Activated T-helper 1 cell treated with anti-CD3 and anti-CD28 coated beads, Interleukin-12 subunit alpha, Interleukin-12 subunit beta, Interleukin-2, Interleukin-4 antibody, amounts not matched to agents 30 ng/mL and 10 ng/mL and 1 ng/mL, durations not matched to agents 14 hours and 24 hours and 36 hours (primary cell): ENCODE measurements at regions of chr6 and their contacts with region 1.

Region 1: DNA sequence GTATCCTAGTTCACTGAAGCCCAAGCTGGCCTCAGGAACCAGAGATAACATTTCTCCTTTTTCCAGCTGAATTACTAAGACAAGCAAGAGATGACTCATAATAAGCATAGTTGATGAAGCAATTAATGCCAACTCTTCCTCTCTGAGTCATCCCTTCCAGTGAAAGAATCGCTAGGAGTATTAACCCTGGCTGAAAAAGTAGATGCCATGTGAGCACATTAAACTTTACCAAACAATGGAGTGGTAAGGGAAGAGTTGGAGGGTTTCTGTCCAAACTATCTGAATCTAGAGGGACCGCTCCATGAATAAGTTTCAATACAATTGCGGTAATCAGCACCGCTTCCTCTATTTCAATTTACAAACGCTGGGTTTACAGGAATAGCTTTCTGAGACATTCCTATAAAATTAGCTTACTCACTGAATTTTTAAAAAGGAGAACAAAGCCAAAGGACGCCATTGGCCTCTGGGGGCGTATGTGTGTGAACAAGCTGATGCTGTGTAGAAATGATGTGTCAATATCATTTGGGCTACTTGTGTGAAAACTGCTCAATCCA is 48.3 kb downstream of the ATXN1 start:
- DNase-seq: no peak
- H3K4me3 Mint-ChIP-seq: peak overlapping the region; percentile 60
- H3K27ac Mint-ChIP-seq: peak overlapping the region; percentile 88
- H3K4me1 Mint-ChIP-seq: peaks cover 65% of the 10 kb centered on the region
- H3K27me3 Mint-ChIP-seq: no peaks in the 10 kb centered on the region

Region 2: GRCh38 chr6:16533721-16534136 is 179.3 kb before region 1 on chr6:
- intact Hi-C with region 1: loop called (anchors 5 kb)
- DNase-seq: no peak
- H3K4me3 Mint-ChIP-seq: no peak overlapping the region
- H3K27ac Mint-ChIP-seq: peak overlapping the region; percentile 83
- H3K4me1 Mint-ChIP-seq: peaks cover 45% of the 10 kb centered on the region
- H3K27me3 Mint-ChIP-seq: no peaks in the 10 kb centered on the region

Region 3: DNA sequence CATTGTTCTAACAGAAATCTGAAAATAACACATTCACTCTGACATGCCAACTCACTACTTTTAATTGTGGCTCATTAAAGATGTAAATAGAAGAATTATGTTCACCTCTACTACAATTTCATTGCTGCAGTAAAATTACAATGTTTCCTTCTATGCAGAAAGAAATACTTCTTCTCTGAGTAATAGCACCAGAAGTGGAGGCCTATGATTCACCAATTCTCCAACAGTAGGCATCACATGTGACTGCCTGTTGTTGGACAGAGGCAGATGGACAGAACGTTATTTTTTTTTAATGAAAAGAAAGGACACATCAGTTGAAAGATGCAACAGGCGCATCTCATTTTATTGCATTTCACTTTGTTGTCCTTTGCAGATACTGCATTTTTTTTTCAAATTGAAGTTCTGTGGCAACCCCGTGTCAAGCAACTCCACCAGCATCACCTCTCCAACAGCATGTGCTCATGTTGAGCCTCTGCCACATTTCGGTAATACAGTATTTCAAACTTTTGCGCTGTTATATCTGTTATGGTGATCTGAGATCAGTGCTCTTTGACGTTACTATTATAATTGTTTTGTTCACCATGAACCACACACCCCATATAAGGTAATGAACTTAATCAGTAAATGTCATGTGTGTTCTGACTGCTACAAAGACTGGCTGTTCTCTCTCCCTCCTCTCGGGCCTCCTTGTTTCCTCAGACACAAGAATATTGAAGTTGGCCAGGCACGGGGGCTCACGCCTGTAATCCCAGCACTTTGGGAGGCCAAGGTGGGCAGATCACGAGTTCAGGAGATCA is 73.1 kb before region 1 on chr6:
- intact Hi-C with region 1: no loop called
- DNase-seq: no peak
- H3K4me3 Mint-ChIP-seq: no peak overlapping the region
- H3K27ac Mint-ChIP-seq: no peak overlapping the region
- H3K4me1 Mint-ChIP-seq: peaks cover 44% of the 10 kb centered on the region
- H3K27me3 Mint-ChIP-seq: no peaks in the 10 kb centered on the region

Region 4: DNA sequence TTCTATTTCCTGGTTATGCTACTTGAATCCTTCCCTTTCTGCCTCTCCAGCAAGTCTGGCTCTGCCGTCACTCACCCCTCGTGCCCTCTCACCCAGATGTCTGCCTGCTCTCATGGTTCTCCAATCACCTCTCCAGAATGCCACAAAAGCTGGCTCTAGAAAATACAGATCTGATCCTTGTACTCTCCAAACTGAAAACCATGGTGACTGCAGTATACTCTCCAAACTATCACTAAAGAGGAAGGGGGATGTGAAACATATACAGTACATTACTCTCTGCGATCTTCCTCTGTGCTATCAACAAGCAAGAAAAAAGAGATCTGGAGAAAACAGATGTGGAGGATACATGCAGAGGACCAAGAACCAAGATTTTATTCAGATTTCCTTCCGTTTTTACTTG is 42.8 kb before region 1 on chr6:
- intact Hi-C with region 1: loop called (anchors 1 kb)
- DNase-seq: no peak
- H3K4me3 Mint-ChIP-seq: peak overlapping the region; percentile 51
- H3K27ac Mint-ChIP-seq: peak overlapping the region; percentile 94
- H3K4me1 Mint-ChIP-seq: peaks cover 84% of the 10 kb centered on the region
- H3K27me3 Mint-ChIP-seq: no peaks in the 10 kb centered on the region

Region 5: GRCh38 chr6:16690608-16691198 is 22.3 kb before region 1 on chr6:
- intact Hi-C with region 1: loop called (anchors 1 kb)
- DNase-seq: no peak
- H3K4me3 Mint-ChIP-seq: peak overlapping the region; percentile 70
- H3K27ac Mint-ChIP-seq: peak overlapping the region; percentile 98
- H3K4me1 Mint-ChIP-seq: peaks cover 90% of the 10 kb centered on the region
- H3K27me3 Mint-ChIP-seq: no peaks in the 10 kb centered on the region

Region 6: DNA sequence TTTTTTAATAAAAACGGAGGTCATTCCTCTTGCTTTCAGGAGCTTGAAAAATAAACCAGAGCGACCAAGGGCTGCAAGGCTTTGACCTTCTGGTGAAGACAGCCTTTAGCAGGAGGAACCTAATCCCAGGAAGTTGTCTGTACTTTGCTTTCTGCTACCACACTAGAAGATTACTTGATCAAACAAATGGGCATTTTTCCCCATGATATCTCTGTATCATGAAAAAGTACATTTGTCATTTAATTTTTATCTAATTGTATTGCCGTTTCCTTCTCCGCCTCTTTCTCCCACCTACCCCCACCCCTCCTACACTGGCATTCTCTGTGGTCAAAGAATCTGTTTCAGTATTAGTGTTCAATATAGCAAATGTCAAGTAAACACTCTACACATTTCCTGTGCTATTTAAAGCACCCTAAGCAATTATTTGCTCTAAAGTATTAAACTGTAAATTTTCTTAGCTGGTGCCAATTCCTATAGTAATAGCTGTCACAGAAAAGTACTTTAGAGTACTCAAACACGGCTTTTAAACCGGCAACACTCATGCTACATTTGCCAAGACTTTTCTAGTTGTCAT is 18.6 kb after region 1 on chr6:
- intact Hi-C with region 1: loop called (anchors 1 kb)
- DNase-seq: peak; percentile 36
- H3K4me3 Mint-ChIP-seq: peak overlapping the region; percentile 51
- H3K27ac Mint-ChIP-seq: peak overlapping the region; percentile 89
- H3K4me1 Mint-ChIP-seq: peaks cover 71% of the 10 kb centered on the region
- H3K27me3 Mint-ChIP-seq: no peaks in the 10 kb centered on the region

Region 7: DNA sequence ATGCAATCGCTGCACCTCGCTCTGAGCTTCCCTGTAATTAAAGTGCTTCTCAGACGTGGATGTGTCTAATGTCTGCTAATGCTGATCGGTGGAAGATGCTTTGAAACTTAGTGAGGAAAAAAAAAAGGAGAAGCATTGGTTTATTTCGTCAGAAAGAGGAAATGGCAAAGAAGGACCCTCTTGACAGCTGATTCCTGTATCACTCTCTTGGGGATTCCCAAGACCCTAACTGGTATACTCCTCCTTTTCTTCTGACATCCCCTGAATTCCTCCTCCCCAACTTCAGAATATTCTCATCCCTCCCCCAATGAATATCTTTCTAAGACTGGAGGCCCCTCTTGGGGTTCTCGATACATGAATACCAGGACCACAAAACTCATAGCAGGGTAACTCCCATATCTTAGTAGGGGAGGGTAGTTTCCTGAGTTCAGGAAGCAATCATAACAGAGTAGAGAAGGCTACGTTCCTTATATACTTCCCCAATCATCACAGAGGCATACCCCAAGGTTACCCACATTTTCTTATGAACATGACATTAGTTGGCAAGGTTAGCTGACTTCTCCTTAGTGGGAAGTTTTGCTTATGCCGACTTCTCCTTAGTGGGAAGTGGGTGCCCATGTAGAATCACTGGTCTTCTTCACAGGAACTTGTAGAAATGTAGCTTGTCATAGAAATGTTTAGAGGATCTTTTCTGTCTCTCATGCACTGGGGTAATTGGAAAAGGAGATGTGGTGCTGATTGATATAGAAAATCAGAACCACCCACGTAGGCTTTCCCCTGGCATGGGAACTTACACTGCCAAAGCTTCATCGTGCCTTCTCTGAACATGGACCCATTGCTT is 112.1 kb after region 1 on chr6:
- intact Hi-C with region 1: no loop called
- DNase-seq: no peak
- H3K4me3 Mint-ChIP-seq: no peak overlapping the region
- H3K27ac Mint-ChIP-seq: no peak overlapping the region
- H3K4me1 Mint-ChIP-seq: peaks cover 27% of the 10 kb centered on the region
- H3K27me3 Mint-ChIP-seq: peaks cover 17% of the 10 kb centered on the region